ENCODE measurements at regions of chr17 and their contacts with region 1.

Region 1: DNA sequence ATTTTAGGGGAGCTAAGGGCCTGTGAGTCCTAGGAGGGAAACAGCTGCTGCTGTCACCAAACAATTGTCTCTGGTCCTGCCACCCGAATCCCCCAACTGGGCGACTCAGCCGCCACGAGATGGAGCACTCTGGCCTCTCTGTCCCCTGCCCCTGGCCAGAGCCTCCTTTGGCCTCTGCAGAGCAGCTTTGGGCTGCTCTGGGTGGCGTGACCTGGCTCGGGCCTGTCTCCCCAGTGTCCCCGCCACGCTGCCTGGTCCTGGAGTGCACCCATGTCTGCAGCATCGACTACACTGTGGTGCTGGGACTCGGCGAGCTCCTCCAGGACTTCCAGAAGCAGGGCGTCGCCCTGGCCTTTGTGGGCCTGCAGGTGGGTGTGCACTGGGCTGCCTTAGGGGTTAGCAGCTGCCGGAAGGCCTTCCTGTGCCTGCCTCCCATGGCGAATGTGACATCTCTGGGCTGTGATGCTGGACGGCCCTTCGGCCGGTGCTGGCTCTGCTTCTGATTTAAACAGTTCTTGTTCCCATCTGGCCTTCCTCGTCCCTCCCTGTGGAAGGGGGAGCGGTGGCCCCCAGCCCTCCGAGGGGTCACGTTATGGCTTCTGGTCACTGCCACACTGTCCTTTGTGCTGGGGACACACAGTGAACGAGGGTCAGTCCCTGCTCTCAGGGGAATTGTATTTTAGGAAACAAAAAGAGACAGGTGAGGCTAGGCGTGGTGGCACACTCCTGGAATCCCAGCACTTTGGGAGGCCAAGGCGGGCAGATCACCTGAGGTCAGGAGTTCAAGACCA is 11.5 kb upstream of the RNF213 start:
- DNase-seq: peak in 1 of 2 donors; percentile 35
- ATAC-seq: no peak
- H3K4me3 ChIP-seq: no peak overlapping the region
- H3K27ac ChIP-seq: no peak overlapping the region
- H3K4me1 ChIP-seq: peaks cover 2% of the 10 kb centered on the region
- H3K27me3 ChIP-seq: no peaks in the 10 kb centered on the region
- CTCF ChIP-seq: no peak

Region 2: GRCh38 chr17:80152081-80152990 is 96.8 kb before region 1 on chr17:
- intact Hi-C with region 1: loop called in 1 of 2 experiments (anchors 2 kb)
- DNase-seq: no peak
- ATAC-seq: no peak
- H3K4me3 ChIP-seq: no peak overlapping the region
- H3K27ac ChIP-seq: no peak overlapping the region
- H3K4me1 ChIP-seq: peaks cover 6% of the 10 kb centered on the region
- H3K27me3 ChIP-seq: no peaks in the 10 kb centered on the region
- CTCF ChIP-seq: no peak

Region 3: GRCh38 chr17:80364216-80364618 is 115.1 kb after region 1 on chr17:
- intact Hi-C with region 1: no loop called
- DNase-seq: peak in 1 of 2 donors; percentile 53
- ATAC-seq: peak in 3 of 4 donors; percentile 25 to 52 (median 45)
- H3K4me3 ChIP-seq: no peak overlapping the region
- H3K27ac ChIP-seq: no peak overlapping the region
- H3K4me1 ChIP-seq: no peaks in the 10 kb centered on the region
- H3K27me3 ChIP-seq: no peaks in the 10 kb centered on the region
- CTCF ChIP-seq: peak; percentile 34

Measured in psoas muscle (tissue), 8 donors.